ENCODE measurements at regions of chr1 and their contacts with region 1.

Region 1: GRCh38 chr1:19596714-19597495 is 47.2 kb upstream of the NBL1 start:
- DNase-seq: peak; percentile 86 to 98 (median 97)
- ATAC-seq: peak; percentile 86
- H3K4me3 ChIP-seq: peak overlapping the region; percentile 59
- H3K4me3 Mint-ChIP-seq: peak overlapping the region; percentile 79 to 100 (median 98)
- H3K27ac ChIP-seq: peak overlapping the region; percentile 99
- H3K27ac Mint-ChIP-seq: peak overlapping the region; percentile 98 to 100 (median 99)
- H3K4me1 ChIP-seq: peaks cover 34 to 45% of the 10 kb centered on the region in 2 donors
- H3K4me1 Mint-ChIP-seq: peaks cover 29 to 56% (median 47%) of the 10 kb centered on the region in 7 donors
- H3K27me3 ChIP-seq: no peaks in the 10 kb centered on the region
- H3K27me3 Mint-ChIP-seq: peaks cover 0 to 11% (median 0%) of the 10 kb centered on the region in 5 donors

Region 2: DNA sequence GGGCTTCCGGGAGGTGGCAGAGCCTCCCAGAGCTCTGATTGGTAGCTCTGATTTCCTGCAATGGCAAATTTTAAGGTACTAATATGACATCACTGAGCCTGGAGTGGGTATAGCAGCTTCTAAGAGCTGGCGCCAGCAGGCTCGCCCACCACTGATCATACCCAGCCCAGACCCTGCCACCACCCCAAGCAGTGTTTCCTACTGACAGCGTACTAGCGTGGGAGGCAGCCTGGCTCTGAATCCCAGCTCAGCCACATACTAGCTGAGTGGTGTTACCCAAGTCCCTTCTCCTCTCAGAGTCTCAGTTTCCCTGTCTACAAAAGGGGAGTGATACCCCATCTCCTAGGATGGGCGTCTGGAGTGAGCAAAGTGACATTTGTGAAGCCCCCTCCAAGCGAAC is 681.6 kb before region 1 on chr1:
- CTCF ChIA-PET with region 1: no interaction called
- POLR2A ChIA-PET with region 1: no interaction called
- intact Hi-C with region 1: no loop called
- DNase-seq: no peak
- ATAC-seq: no peak
- H3K4me3 ChIP-seq: no peak overlapping the region
- H3K4me3 Mint-ChIP-seq: no peak overlapping the region
- H3K27ac ChIP-seq: no peak overlapping the region
- H3K27ac Mint-ChIP-seq: peak overlapping the region in 2 of 9 donors; percentile 28 to 32
- H3K4me1 ChIP-seq: peaks cover 0 to 4% of the 10 kb centered on the region in 2 donors
- H3K4me1 Mint-ChIP-seq: peaks cover 2 to 15% (median 9%) of the 10 kb centered on the region in 7 donors
- H3K27me3 ChIP-seq: no peaks in the 10 kb centered on the region
- H3K27me3 Mint-ChIP-seq: no peaks in the 10 kb centered on the region

Region 3: GRCh38 chr1:18956369-18957135 is 640.4 kb before region 1 on chr1 and contains the start of gene IFFO2:
- CTCF ChIA-PET with region 1: no interaction called
- POLR2A ChIA-PET with region 1: interaction called, 3 read pairs
- intact Hi-C with region 1: loop called (anchors 2 kb)
- DNase-seq: peak; percentile 95 to 100 (median 97)
- ATAC-seq: peak; percentile 90
- H3K4me3 ChIP-seq: peak within 1 kb of the TSS; percentile 66
- H3K4me3 Mint-ChIP-seq: peak within 1 kb of the TSS; percentile 89 to 96 (median 93)
- H3K27ac ChIP-seq: peak within 1 kb of the TSS; percentile 98
- H3K27ac Mint-ChIP-seq: peak within 1 kb of the TSS; percentile 37 to 99 (median 92)
- H3K4me1 ChIP-seq: peaks cover 51 to 52% of the 10 kb centered on the region in 2 donors
- H3K4me1 Mint-ChIP-seq: peaks cover 47 to 58% (median 52%) of the 10 kb centered on the region in 7 donors
- H3K27me3 ChIP-seq: no peaks in the 10 kb centered on the region
- H3K27me3 Mint-ChIP-seq: peaks cover 0 to 28% (median 0%) of the 10 kb centered on the region in 5 donors
- total RNA-seq, gene IFFO2: 20.5 to 57.1 (median 28.2) TPM

Region 4: GRCh38 chr1:19251305-19252196 is 345.4 kb before region 1 on chr1 and contains the starts of genes EMC1 and MRTO4:
- CTCF ChIA-PET with region 1: no interaction called
- POLR2A ChIA-PET with region 1: interaction called, 4 read pairs
- intact Hi-C with region 1: loop called (anchors 1 kb)
- DNase-seq: peak; percentile 83 to 96 (median 92)
- ATAC-seq: peak; percentile 97
- H3K4me3 ChIP-seq: peak within 1 kb of the TSS; percentile 92
- H3K4me3 Mint-ChIP-seq: peak within 1 kb of the TSS; percentile 91 to 98 (median 96)
- H3K27ac ChIP-seq: peak within 1 kb of the TSS; percentile 91
- H3K27ac Mint-ChIP-seq: peak within 1 kb of the TSS; percentile 91 to 97 (median 95)
- H3K4me1 ChIP-seq: peaks cover 26 to 30% of the 10 kb centered on the region in 2 donors
- H3K4me1 Mint-ChIP-seq: peaks cover 20 to 46% (median 29%) of the 10 kb centered on the region in 7 donors
- H3K27me3 ChIP-seq: no peaks in the 10 kb centered on the region
- H3K27me3 Mint-ChIP-seq: no peaks in the 10 kb centered on the region
- total RNA-seq, gene EMC1: 29.8 to 43.7 (median 37.1) TPM
- total RNA-seq, gene MRTO4: 17.1 to 42.3 (median 22.4) TPM

Region 5: GRCh38 chr1:19390901-19391595 is 205.9 kb before region 1 on chr1:
- CTCF ChIA-PET with region 1: interaction called, 3 read pairs
- POLR2A ChIA-PET with region 1: interaction called, 27 read pairs
- intact Hi-C with region 1: loop called (anchors 1 kb)
- DNase-seq: peak; percentile 33 to 84 (median 76)
- ATAC-seq: peak; percentile 84
- H3K4me3 ChIP-seq: peak overlapping the region; percentile 46
- H3K4me3 Mint-ChIP-seq: peak overlapping the region; percentile 78 to 90 (median 84)
- H3K27ac ChIP-seq: peak overlapping the region; percentile 60
- H3K27ac Mint-ChIP-seq: peak overlapping the region; percentile 82 to 98 (median 94)
- H3K4me1 ChIP-seq: peaks cover 39 to 47% of the 10 kb centered on the region in 2 donors
- H3K4me1 Mint-ChIP-seq: peaks cover 58 to 91% (median 83%) of the 10 kb centered on the region in 7 donors
- H3K27me3 ChIP-seq: no peaks in the 10 kb centered on the region
- H3K27me3 Mint-ChIP-seq: no peaks in the 10 kb centered on the region

Region 6: DNA sequence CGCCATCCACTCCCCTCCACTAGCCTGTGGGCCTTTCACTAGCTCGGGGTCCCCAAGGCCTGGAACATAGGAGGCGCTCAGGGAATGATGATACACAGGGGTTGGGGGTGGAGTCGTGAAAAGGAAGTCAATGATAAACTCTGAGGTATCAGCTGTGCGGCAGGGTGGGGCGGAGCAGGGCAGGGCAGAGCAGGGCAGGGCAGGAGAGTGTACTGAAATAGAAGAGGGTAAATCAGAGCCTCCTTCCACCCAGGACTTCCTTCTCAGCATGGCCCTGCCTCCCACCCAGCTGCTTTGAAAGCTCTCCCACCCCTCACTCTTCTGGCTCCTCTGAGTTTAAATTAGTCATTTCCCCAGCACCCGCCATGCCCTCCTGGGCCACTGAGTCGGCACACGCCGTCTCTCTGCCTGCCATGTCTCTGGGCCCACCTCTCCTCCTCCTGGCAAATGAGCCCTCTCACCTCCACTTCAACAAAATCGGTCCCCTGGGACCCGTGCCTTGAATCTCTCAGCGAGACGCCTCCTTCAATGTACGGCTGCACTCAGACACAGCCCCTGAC is 128.4 kb before region 1 on chr1:
- CTCF ChIA-PET with region 1: no interaction called
- POLR2A ChIA-PET with region 1: interaction called, 28 read pairs
- intact Hi-C with region 1: loop called (anchors 1 to 2 kb)
- DNase-seq: peak in 8 of 9 donors; percentile 54 to 79 (median 70)
- ATAC-seq: peak; percentile 92
- H3K4me3 ChIP-seq: peak overlapping the region; percentile 32
- H3K4me3 Mint-ChIP-seq: peak overlapping the region; percentile 67 to 84 (median 80)
- H3K27ac ChIP-seq: peak overlapping the region; percentile 73
- H3K27ac Mint-ChIP-seq: peak overlapping the region; percentile 87 to 97 (median 94)
- H3K4me1 ChIP-seq: peaks cover 81 to 92% of the 10 kb centered on the region in 2 donors
- H3K4me1 Mint-ChIP-seq: peaks cover 56 to 99% (median 94%) of the 10 kb centered on the region in 7 donors
- H3K27me3 ChIP-seq: no peaks in the 10 kb centered on the region
- H3K27me3 Mint-ChIP-seq: no peaks in the 10 kb centered on the region

Region 7: GRCh38 chr1:19563324-19564097 is 33.4 kb before region 1 on chr1:
- CTCF ChIA-PET with region 1: no interaction called
- POLR2A ChIA-PET with region 1: no interaction called
- intact Hi-C with region 1: no loop called
- DNase-seq: no peak
- ATAC-seq: no peak
- H3K4me3 ChIP-seq: no peak overlapping the region
- H3K4me3 Mint-ChIP-seq: no peak overlapping the region
- H3K27ac ChIP-seq: no peak overlapping the region
- H3K27ac Mint-ChIP-seq: peak overlapping the region in 1 of 9 donors; percentile 2
- H3K4me1 ChIP-seq: no peaks in the 10 kb centered on the region
- H3K4me1 Mint-ChIP-seq: peaks cover 0 to 5% (median 4%) of the 10 kb centered on the region in 7 donors
- H3K27me3 ChIP-seq: no peaks in the 10 kb centered on the region
- H3K27me3 Mint-ChIP-seq: no peaks in the 10 kb centered on the region

Region 8: GRCh38 chr1:19606817-19607642 is 10.1 kb after region 1 on chr1:
- CTCF ChIA-PET with region 1: no interaction called
- POLR2A ChIA-PET with region 1: interaction called, 88 read pairs
- intact Hi-C with region 1: loop called (anchors 1 kb)
- DNase-seq: peak in 8 of 9 donors; percentile 41 to 71 (median 53)
- ATAC-seq: peak; percentile 80
- H3K4me3 ChIP-seq: no peak overlapping the region
- H3K4me3 Mint-ChIP-seq: peak overlapping the region; percentile 27 to 78 (median 57)
- H3K27ac ChIP-seq: no peak overlapping the region
- H3K27ac Mint-ChIP-seq: peak overlapping the region; percentile 15 to 79 (median 63)
- H3K4me1 ChIP-seq: peaks cover 33 to 49% of the 10 kb centered on the region in 2 donors
- H3K4me1 Mint-ChIP-seq: peaks cover 33 to 80% (median 70%) of the 10 kb centered on the region in 7 donors
- H3K27me3 ChIP-seq: no peaks in the 10 kb centered on the region
- H3K27me3 Mint-ChIP-seq: no peaks in the 10 kb centered on the region

Region 9: GRCh38 chr1:19882111-19883071 is 285.5 kb after region 1 on chr1 and contains the start of gene OTUD3:
- CTCF ChIA-PET with region 1: no interaction called
- POLR2A ChIA-PET with region 1: no interaction called
- intact Hi-C with region 1: loop called in 1 of 2 experiments (anchors 5 kb)
- DNase-seq: peak; percentile 87 to 97 (median 96)
- ATAC-seq: peak; percentile 100
- H3K4me3 ChIP-seq: peak within 1 kb of the TSS; percentile 66
- H3K4me3 Mint-ChIP-seq: peak within 1 kb of the TSS; percentile 77 to 95 (median 88)
- H3K27ac ChIP-seq: peak within 1 kb of the TSS; percentile 82
- H3K27ac Mint-ChIP-seq: peak within 1 kb of the TSS; percentile 3 to 88 (median 75)
- H3K4me1 ChIP-seq: peaks cover 15 to 23% of the 10 kb centered on the region in 2 donors
- H3K4me1 Mint-ChIP-seq: peaks cover 20 to 50% (median 47%) of the 10 kb centered on the region in 7 donors
- H3K27me3 ChIP-seq: no peaks in the 10 kb centered on the region
- H3K27me3 Mint-ChIP-seq: peaks cover 0 to 15% (median 6%) of the 10 kb centered on the region in 5 donors
- total RNA-seq, gene OTUD3: 13.1 to 23.6 (median 20.8) TPM